ENCODE measurements at regions of chr4 and their contacts with region 1.

Region 1: DNA sequence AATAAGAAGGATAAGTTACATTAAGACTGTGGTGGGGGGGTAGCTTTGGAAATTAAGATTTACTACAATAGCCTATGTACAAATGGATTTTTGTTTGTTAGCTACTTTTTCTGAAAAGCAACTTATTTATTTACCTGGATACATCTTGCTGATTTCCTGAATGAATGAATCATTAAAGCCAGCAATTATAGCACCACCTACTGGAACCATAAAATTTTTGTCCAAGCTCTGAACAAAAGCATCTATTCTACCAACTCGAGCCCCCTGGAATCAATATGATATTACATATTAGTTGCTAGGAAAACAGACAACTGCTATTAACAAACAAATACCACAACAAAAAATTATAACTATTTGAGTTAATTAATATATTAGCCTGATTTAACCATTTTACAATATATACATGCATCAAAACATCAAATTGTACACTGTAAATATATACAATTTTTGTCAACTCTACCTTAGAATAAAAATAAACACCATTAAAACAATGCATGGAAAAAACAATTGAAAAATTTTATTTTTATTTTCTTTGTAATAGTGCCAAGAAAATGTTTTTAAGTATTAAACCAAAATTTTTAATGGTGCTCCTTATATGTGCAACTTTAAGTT is 15.3 kb downstream of the SEPSECS start:
- ATAC-seq: peak in 1 of 8 experiments; percentile 25
- H3K4me3 ChIP-seq: no peak overlapping the region
- H3K27ac ChIP-seq: no peak overlapping the region
- H3K4me1 ChIP-seq: no peaks in the 10 kb centered on the region

Region 2: DNA sequence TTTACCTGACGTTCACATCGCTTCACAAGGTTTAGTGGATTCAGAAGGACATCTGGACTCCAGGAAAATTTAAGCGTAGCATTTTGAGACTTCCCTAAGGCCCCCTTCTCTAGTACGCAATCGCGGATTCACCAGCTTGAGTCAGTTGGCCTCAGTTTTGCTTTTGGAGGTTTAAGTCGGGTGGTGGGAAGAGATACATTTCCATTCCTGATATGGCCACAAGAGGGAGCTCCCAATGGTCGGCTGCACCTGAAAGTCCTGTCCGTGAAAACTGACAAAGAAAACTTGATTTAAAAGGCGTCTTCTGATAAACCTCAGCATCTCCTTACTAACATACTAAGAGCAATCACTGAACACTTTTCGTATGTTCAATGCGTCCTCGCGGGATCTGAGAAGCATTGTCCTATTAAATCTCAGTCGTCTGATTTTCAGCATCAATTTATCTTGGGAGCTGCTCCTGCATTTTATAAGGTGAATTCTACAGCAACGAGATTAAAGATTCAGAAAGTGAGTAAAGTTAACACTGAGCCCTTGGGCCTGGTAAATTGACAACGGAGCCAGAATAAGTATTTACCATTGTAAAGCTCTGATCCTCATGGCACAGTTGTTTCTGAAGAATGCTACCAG is 164.8 kb before region 1 on chr4:
- in situ Hi-C with region 1: loop called in 2 of 9 experiments (anchors 25 kb)
- ATAC-seq: peak in 7 of 8 experiments; percentile 36 to 83 (median 57)
- H3K4me3 ChIP-seq: peak overlapping the region in 3 of 5 donors; percentile 4 to 25 (median 7)
- H3K27ac ChIP-seq: no peak overlapping the region
- H3K4me1 ChIP-seq: peaks cover 0 to 10% of the 10 kb centered on the region in 2 donors